ENCODE measurements at regions of chr1 and their contacts with region 1.

Region 1: DNA sequence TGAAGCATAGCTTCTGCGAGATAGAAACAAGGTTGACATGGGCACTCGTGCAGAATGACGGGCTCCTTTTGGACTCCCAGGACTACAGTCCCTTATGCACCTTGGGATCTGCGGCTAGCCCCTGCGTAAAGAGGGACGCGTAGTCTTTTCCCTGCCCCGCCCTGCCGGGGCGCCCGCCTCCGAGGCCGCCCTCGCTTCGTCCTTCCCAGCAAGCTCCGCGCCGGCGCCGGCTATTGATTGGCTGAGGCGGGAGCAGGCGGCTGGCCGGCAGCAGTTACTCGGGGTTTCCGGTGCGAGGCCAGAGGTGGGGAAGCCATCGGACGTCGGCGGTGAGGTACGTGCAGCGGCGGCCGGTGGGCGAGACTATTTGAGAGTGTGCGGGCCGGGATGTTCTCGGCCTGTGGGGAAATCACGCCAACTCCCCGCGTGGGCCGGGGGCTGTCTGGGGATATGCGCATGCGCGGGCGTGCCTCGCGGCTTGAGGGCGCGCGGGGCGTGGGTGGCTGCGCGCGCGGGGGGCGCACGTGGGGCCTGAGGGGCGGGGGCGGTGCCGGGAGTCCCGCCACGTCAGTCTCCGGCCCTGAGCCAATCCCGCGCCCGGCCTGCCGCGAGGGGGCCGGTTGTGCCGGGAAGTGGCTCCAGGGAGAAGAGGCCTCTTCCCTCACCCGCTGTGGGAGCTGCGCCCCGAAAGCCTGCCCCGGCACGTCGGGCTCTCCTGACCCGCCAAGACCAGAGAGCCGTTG is at the start of gene TXLNA:
- DNase-seq: peak; percentile 98
- CTCF ChIP-seq: peak; percentile 11

Region 2: GRCh38 chr1:32200226-32201010 is 20.8 kb after region 1 on chr1 and contains the start of gene CCDC28B:
- CTCF ChIA-PET with region 1: interaction called, 4 read pairs
- POLR2A ChIA-PET with region 1: interaction called, 13 read pairs
- DNase-seq: peak; percentile 78
- CTCF ChIP-seq: no peak